H1 (cell line): ENCODE measurements at regions of chr1 and their contacts with region 1.

Region 1: GRCh38 chr1:11719313-11720032 is 16.5 kb upstream of the AGTRAP start:
- DNase-seq: peak in 1 of 2 experiments; percentile 91
- H3K4me3 ChIP-seq: peak overlapping the region in 2 of 4 experiments; percentile 23 to 46; a peak in 3 of 8 replicates
- H3K27ac ChIP-seq: no peak overlapping the region
- H3K4me1 ChIP-seq: no peaks in the 10 kb centered on the region
- H3K27me3 ChIP-seq: no peaks in the 10 kb centered on the region
- CTCF ChIP-seq: peak; percentile 78 to 92 (median 84)
- EP300 ChIP-seq: no peak
- POLR2A ChIP-seq: no peak
- RAD21 ChIP-seq: peak; percentile 90 to 91

Region 2: DNA sequence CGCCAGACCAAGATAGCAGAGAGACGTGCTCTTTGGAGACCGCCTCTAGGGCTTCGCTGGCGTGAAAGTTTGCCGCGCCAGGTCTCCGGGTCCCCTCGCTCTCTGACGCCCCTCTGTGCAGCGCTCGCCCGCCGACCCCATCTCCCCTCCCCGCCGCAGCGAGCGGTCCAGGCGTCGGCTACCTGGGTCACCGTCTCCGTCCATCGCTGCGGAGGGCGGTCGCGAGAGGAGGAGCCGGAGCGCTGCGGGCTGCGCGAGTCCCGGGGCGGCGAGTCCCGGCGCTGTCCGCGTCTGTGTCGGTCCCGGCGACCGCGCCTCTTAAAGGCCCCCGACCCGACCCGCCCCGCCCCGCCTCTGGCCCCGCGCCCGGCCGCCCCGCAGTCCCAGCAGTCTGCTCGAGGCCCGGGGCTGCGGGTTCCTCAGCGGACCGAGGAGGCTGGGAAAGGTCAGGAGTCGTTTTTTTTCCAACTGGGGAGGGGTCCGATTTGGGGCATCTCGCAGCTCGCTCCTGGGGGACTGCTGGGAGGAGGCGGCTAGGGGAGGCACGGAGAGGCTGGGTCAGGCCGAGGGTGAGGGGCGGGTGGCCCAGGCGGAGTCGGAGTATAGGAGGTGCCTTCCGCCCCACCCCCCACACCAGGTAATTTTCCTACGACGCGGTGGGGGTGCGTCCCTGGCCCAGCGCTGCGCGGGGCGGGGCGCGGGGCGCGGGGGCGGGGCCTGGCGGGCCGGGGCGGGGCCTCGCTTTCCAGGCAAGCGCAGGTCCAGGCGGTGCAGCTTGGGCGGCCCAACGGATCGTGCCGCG is 65.1 kb before region 1 on chr1 and contains the starts of genes FBXO2 and FBXO44:
- CTCF ChIA-PET with region 1: interaction called, 25 read pairs
- POLR2A ChIA-PET with region 1: interaction called, 6 read pairs
- DNase-seq: peak in 1 of 2 experiments; percentile 90
- H3K4me3 ChIP-seq: peak within 1 kb of the TSS; percentile 56 to 78 (median 72)
- H3K27ac ChIP-seq: no peak within 1 kb of the TSS
- H3K4me1 ChIP-seq: peaks cover 6 to 35% (median 28%) of the 10 kb centered on the region in 4 experiments
- H3K27me3 ChIP-seq: peaks cover 0 to 4% (median 2%) of the 10 kb centered on the region in 4 experiments; a peak in 2 of 7 replicates
- CTCF ChIP-seq: no peak
- EP300 ChIP-seq: no peak
- POLR2A ChIP-seq: no peak
- RAD21 ChIP-seq: no peak
- total RNA-seq, gene FBXO2: 51.3 and 55.5 TPM in 2 replicates
- total RNA-seq, gene FBXO44: 27.2 and 29.2 TPM in 2 replicates

Region 3: DNA sequence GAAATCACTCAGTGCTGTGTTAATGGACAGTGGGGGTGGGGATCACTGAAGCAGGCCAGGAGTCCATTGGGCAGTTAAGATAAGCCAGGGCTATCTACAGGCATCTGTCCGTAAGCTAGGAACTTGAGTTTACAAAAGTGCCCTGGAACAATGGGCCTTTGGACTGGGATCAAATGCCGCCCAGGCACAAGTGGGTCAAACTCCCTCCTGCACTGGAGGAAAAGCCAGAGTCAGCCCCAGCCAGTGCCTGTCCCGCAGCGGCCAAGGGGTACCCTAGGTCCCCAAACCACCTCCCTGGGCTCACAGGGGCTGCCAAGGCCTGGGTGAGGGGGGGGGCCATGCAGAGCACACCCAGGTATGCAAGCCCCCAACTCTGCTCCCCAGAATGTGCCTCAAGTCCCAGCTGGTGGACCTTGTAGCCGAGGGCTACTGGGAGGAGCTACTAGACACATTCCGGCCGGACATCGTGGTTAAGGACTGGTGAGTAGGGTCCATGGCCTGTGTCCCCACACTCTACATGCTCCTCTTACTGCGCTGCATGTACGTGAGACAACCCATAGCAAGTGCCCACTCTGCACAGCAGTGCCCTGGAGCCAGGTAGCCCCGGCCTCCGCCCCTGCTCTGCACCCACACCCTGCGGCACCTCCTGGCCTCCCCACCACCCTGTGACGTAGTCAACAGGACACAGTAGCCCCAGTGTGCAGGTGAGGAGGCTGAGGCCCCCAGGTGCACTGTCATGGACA is 47.8 kb before region 1 on chr1:
- CTCF ChIA-PET with region 1: interaction called, 104 read pairs
- POLR2A ChIA-PET with region 1: interaction called, 12 read pairs
- DNase-seq: no peak
- H3K4me3 ChIP-seq: no peak overlapping the region
- H3K27ac ChIP-seq: no peak overlapping the region
- H3K4me1 ChIP-seq: no peaks in the 10 kb centered on the region; a peak in 2 of 7 replicates
- H3K27me3 ChIP-seq: no peaks in the 10 kb centered on the region
- CTCF ChIP-seq: no peak
- EP300 ChIP-seq: no peak
- POLR2A ChIP-seq: peak in 1 of 2 experiments; percentile 64; a peak in 2 of 3 replicates
- RAD21 ChIP-seq: no peak

Region 4: DNA sequence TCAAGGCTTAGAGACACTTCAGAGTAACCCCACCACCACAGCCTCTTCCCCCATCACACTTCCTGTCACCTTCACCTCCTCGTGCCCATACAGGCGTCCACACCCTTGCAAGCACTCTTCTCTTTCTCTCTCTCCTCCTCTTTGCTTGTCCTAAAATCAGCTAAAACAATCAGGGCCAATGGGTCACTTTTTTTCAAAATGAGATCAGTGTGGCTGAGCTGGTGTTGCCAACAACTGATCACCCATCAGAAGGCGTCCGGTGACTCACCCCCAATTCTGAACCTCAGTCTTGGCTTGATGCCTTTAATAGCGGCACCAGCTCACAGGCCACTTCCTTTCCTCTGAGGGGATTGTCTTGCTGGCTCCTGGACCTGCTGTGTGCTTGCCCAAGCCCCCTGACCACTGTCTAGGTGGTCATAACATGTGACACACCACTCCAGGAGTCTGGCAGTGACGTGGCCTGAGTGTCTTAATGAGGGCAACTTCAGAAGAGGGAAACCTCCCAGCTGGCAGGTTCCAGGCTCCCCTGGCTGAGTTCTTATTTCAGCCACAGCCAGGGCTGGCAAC is 26.4 kb before region 1 on chr1:
- CTCF ChIA-PET with region 1: interaction called, 28 read pairs
- POLR2A ChIA-PET with region 1: interaction called, 329 read pairs
- DNase-seq: no peak
- H3K4me3 ChIP-seq: peak overlapping the region in 3 of 4 experiments; percentile 75 to 99 (median 79); a peak in 4 of 8 replicates
- H3K27ac ChIP-seq: no peak overlapping the region
- H3K4me1 ChIP-seq: peaks cover 8 to 38% (median 26%) of the 10 kb centered on the region in 4 experiments
- H3K27me3 ChIP-seq: peaks cover 0 to 2% (median 0%) of the 10 kb centered on the region in 4 experiments; a peak in 2 of 7 replicates
- CTCF ChIP-seq: no peak
- EP300 ChIP-seq: no peak
- POLR2A ChIP-seq: 0 out of 3 replicates have a peak, but pooled peaks of 1 of the 2 experiments have one; percentile 8
- RAD21 ChIP-seq: no peak

Region 5: GRCh38 chr1:11730429-11730891 is 11.0 kb after region 1 on chr1:
- CTCF ChIA-PET with region 1: interaction called, 13 read pairs
- POLR2A ChIA-PET with region 1: interaction called, 5 read pairs
- DNase-seq: no peak
- H3K4me3 ChIP-seq: no peak overlapping the region
- H3K27ac ChIP-seq: no peak overlapping the region
- H3K4me1 ChIP-seq: peaks cover 4 to 37% (median 26%) of the 10 kb centered on the region in 4 experiments
- H3K27me3 ChIP-seq: no peaks in the 10 kb centered on the region
- CTCF ChIP-seq: no peak
- EP300 ChIP-seq: no peak
- POLR2A ChIP-seq: no peak
- RAD21 ChIP-seq: no peak

Region 6: GRCh38 chr1:11749203-11749689 is 29.8 kb after region 1 on chr1:
- CTCF ChIA-PET with region 1: interaction called, 12 read pairs
- POLR2A ChIA-PET with region 1: interaction called, 3 read pairs
- DNase-seq: peak in 1 of 2 experiments; percentile 72
- H3K4me3 ChIP-seq: no peak overlapping the region
- H3K27ac ChIP-seq: no peak overlapping the region
- H3K4me1 ChIP-seq: peaks cover 0 to 16% (median 5%) of the 10 kb centered on the region in 4 experiments; a peak in 5 of 7 replicates
- H3K27me3 ChIP-seq: no peaks in the 10 kb centered on the region
- CTCF ChIP-seq: peak; percentile 68 to 89 (median 77)
- EP300 ChIP-seq: no peak
- POLR2A ChIP-seq: no peak
- RAD21 ChIP-seq: peak; percentile 83 to 86

Region 7: GRCh38 chr1:11777658-11778322 is 58.3 kb after region 1 on chr1:
- CTCF ChIA-PET with region 1: no interaction called
- POLR2A ChIA-PET with region 1: no interaction called
- DNase-seq: no peak
- H3K4me3 ChIP-seq: no peak overlapping the region
- H3K27ac ChIP-seq: no peak overlapping the region
- H3K4me1 ChIP-seq: no peaks in the 10 kb centered on the region; a peak in 1 of 7 replicates
- H3K27me3 ChIP-seq: no peaks in the 10 kb centered on the region
- CTCF ChIP-seq: no peak
- EP300 ChIP-seq: no peak
- POLR2A ChIP-seq: no peak
- RAD21 ChIP-seq: no peak